Caco-2 (cell line): ENCODE measurements at regions of chr21 and their contacts with region 1.

Region 1: GRCh38 chr21:43810505-43811261 is 21.3 kb downstream of the RRP1 start:
- DNase-seq: peak; percentile 91 to 96
- H3K4me3 ChIP-seq: no peak overlapping the region
- H3K4me3 Mint-ChIP-seq: no peak overlapping the region
- H3K27ac Mint-ChIP-seq: peak overlapping the region; percentile 32
- H3K4me1 ChIP-seq: peaks cover 12% of the 10 kb centered on the region
- H3K4me1 Mint-ChIP-seq: peaks cover 18% of the 10 kb centered on the region
- H3K27me3 ChIP-seq: no peaks in the 10 kb centered on the region
- H3K27me3 Mint-ChIP-seq: no peaks in the 10 kb centered on the region
- CTCF ChIP-seq: peak; percentile 92 to 93

Region 2: DNA sequence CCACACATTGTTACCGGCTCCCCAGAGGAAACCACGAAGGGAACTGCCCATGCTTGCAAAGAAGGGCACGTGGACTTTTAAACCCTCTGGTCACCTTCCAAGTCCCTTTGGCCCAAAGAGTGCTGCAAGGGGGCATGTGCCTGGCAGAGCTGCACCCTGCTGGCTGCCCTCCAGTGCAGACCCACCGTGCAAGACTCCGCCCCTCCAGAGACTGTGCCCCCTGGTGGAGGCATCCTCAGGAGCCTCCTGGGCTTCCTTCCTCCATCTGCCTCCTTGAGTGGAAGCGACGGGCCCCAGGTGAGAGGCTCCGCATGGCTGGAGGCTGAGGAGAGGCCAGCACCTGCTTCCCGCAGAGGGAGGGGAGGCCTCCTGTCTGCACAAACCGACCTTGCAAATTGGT is 541.2 kb before region 1 on chr21:
- CTCF ChIA-PET with region 1: no interaction called
- POLR2A ChIA-PET with region 1: no interaction called
- intact Hi-C with region 1: no loop called
- DNase-seq: no peak
- H3K4me3 ChIP-seq: no peak overlapping the region
- H3K4me3 Mint-ChIP-seq: no peak overlapping the region
- H3K27ac Mint-ChIP-seq: no peak overlapping the region
- H3K4me1 ChIP-seq: peaks cover 20% of the 10 kb centered on the region
- H3K4me1 Mint-ChIP-seq: peaks cover 5% of the 10 kb centered on the region
- H3K27me3 ChIP-seq: no peaks in the 10 kb centered on the region
- H3K27me3 Mint-ChIP-seq: no peaks in the 10 kb centered on the region
- CTCF ChIP-seq: peak; percentile 10 to 23

Region 3: GRCh38 chr21:43789276-43790009 is 21.2 kb before region 1 on chr21 and contains the start of gene RRP1:
- CTCF ChIA-PET with region 1: no interaction called
- POLR2A ChIA-PET with region 1: no interaction called
- intact Hi-C with region 1: no loop called
- DNase-seq: peak; percentile 83 to 96
- H3K4me3 ChIP-seq: peak within 1 kb of the TSS; percentile 99
- H3K4me3 Mint-ChIP-seq: peak within 1 kb of the TSS; percentile 90
- H3K27ac Mint-ChIP-seq: peak within 1 kb of the TSS; percentile 89
- H3K4me1 ChIP-seq: no peaks in the 10 kb centered on the region
- H3K4me1 Mint-ChIP-seq: no peaks in the 10 kb centered on the region
- H3K27me3 ChIP-seq: no peaks in the 10 kb centered on the region
- H3K27me3 Mint-ChIP-seq: no peaks in the 10 kb centered on the region
- CTCF ChIP-seq: peak; percentile 59 to 93
- total RNA-seq, gene RRP1: 51.6 and 52.8 TPM in 2 replicates

Region 4: GRCh38 chr21:43975495-43975993 is 164.9 kb after region 1 on chr21:
- CTCF ChIA-PET with region 1: interaction called, 10 read pairs
- POLR2A ChIA-PET with region 1: no interaction called
- intact Hi-C with region 1: loop called (anchors 1 kb)
- DNase-seq: peak; percentile 83 to 88
- H3K4me3 ChIP-seq: no peak overlapping the region
- H3K4me3 Mint-ChIP-seq: no peak overlapping the region
- H3K27ac Mint-ChIP-seq: no peak overlapping the region
- H3K4me1 ChIP-seq: no peaks in the 10 kb centered on the region
- H3K4me1 Mint-ChIP-seq: peaks cover 12% of the 10 kb centered on the region
- H3K27me3 ChIP-seq: no peaks in the 10 kb centered on the region
- H3K27me3 Mint-ChIP-seq: no peaks in the 10 kb centered on the region
- CTCF ChIP-seq: peak; percentile 92 to 94

Region 5: GRCh38 chr21:43991447-43991991 is 180.8 kb after region 1 on chr21:
- CTCF ChIA-PET with region 1: no interaction called
- POLR2A ChIA-PET with region 1: no interaction called
- intact Hi-C with region 1: no loop called
- DNase-seq: no peak
- H3K4me3 ChIP-seq: no peak overlapping the region
- H3K4me3 Mint-ChIP-seq: no peak overlapping the region
- H3K27ac Mint-ChIP-seq: no peak overlapping the region
- H3K4me1 ChIP-seq: no peaks in the 10 kb centered on the region; the same call in 1 of the 2 replicates
- H3K4me1 Mint-ChIP-seq: no peaks in the 10 kb centered on the region
- H3K27me3 ChIP-seq: no peaks in the 10 kb centered on the region
- H3K27me3 Mint-ChIP-seq: no peaks in the 10 kb centered on the region
- CTCF ChIP-seq: no peak